GM10248 (cell line): ENCODE measurements at regions of chr1 and their contacts with region 1.

Region 1: GRCh38 chr1:53278201-53278725 is 39.9 kb upstream of the MAGOH start:
- DNase-seq: peak; percentile 83
- CTCF ChIP-seq: peak; percentile 90

Region 2: GRCh38 chr1:53255031-53255430 is 23.2 kb before region 1 on chr1:
- CTCF ChIA-PET with region 1: interaction called, 79 read pairs
- POLR2A ChIA-PET with region 1: no interaction called
- DNase-seq: no peak
- CTCF ChIP-seq: no peak

Region 3: DNA sequence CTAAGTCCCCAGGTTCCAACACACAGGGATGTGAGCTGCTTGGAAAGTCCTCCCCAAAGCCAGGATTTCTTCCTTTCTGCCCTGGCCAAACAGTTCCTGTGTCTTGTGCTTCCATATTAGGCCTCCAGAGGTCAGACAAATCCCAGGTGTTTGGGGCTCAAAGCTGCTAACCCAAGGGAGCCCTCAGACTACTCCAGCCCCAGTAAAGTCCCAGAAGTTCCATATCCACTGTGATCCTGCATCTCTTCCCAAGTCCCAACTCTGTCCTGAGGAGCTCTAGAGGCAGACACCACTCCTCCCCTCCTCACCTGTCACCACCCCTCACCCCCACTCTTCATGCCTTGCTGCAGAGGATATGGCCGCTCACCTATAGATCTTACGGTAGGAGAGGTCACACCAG is 12.2 kb before region 1 on chr1:
- CTCF ChIA-PET with region 1: interaction called, 79 read pairs
- POLR2A ChIA-PET with region 1: no interaction called
- DNase-seq: no peak
- CTCF ChIP-seq: no peak

Region 4: DNA sequence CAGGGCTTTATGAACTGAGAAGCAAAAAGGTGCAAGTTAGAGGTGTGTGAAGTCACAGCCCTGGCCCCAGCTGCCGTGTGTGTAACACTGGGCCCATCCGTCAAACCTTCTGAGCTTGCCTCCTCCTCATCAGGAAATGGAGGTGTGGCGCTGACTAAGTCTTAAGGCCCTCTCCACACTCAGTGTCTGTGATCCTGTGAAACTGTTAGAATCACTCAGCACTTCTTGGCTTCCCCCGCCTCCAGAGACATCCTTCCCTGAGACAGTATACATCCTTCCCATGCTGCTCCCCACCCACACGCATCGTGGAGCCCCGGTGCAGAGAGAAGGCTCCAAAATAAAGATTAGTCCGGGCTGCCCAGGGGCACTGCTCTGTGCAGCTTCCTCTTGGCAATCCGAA is 16.3 kb after region 1 on chr1:
- CTCF ChIA-PET with region 1: interaction called, 74 read pairs
- POLR2A ChIA-PET with region 1: interaction called, 4 read pairs
- DNase-seq: peak; percentile 64
- CTCF ChIP-seq: no peak

Region 5: GRCh38 chr1:53413175-53414001 is 135.1 kb after region 1 on chr1:
- CTCF ChIA-PET with region 1: interaction called, 12 read pairs
- POLR2A ChIA-PET with region 1: no interaction called
- DNase-seq: peak; percentile 48
- CTCF ChIP-seq: no peak